ENCODE measurements at regions of chr3 and their contacts with region 1.

Region 1: GRCh38 chr3:142888481-142889211 is at the start of gene PCOLCE2:
- DNase-seq: peak; percentile 52 to 81
- ATAC-seq: peak; percentile 73
- H3K4me3 ChIP-seq: peak within 1 kb of the TSS; percentile 70 to 91
- H3K27ac ChIP-seq: no peak within 1 kb of the TSS
- H3K4me1 ChIP-seq: no peaks in the 10 kb centered on the region
- H3K27me3 ChIP-seq: no peaks in the 10 kb centered on the region
- total RNA-seq, gene PCOLCE2: 83.3 to 106 TPM

Region 2: GRCh38 chr3:142976621-142977398 is 88.2 kb after region 1 on chr3:
- intact Hi-C with region 1: loop called in 1 of 2 experiments (anchors 5 kb)
- DNase-seq: peak; percentile 94 to 96
- ATAC-seq: peak; percentile 93
- H3K4me3 ChIP-seq: no peak overlapping the region
- H3K27ac ChIP-seq: no peak overlapping the region
- H3K4me1 ChIP-seq: no peaks in the 10 kb centered on the region
- H3K27me3 ChIP-seq: no peaks in the 10 kb centered on the region